Body of pancreas (tissue), 4 donors: ENCODE measurements at regions of chr2 and their contacts with region 1.

Region 1: DNA sequence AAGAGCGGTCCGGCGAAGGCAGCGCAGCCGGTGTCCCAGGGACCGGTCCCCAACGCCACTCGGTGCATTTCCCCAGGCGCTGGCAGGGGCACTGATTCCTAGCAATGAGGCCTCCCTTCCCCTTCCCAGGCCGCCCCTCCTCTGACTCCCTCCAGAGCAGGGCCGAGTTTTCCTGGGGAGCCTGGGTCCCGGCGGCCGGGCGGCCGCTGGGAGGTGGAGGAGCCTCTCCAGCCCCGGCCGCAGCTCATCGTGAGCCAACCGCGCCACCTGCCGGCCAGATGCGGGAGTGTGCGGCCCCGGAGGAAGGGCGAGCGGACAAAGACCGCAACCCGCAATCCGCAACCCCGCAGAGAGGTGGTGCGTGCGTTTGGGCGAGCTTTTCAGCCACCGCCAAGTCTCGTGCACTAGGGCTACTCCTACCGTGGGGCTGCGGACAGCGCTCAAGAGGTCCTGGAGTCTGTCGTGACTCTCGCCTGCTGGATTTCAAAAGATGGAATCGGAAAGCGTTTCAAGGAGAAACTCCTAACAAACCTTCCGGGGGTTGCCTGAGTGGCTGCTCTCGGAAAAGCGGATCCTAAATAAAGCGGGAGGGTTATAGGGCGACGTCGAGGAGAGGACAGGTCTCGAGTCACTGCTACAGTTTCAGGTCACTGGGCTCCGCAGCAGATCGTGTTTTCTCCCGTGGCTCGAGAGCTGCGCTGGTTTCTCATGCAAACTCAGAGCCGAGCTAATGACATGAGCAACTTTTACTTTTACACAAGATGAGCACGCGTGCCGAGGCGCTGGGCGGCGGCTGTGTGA is 1.5 kb upstream of the EPHA4 start:
- DNase-seq: peak; percentile 82 to 90 (median 86)
- ATAC-seq: peak; percentile 79
- H3K4me3 ChIP-seq: peak overlapping the region; percentile 30 to 70
- H3K27ac ChIP-seq: peak overlapping the region in 3 of 4 donors; percentile 70 to 77 (median 75)
- H3K4me1 ChIP-seq: peaks cover 31% of the 10 kb centered on the region
- H3K27me3 ChIP-seq: peaks cover 0 to 27% of the 10 kb centered on the region in 2 donors
- CTCF ChIP-seq: peak; percentile 92 to 98 (median 97)
- POLR2A ChIP-seq: peak in 2 of 3 donors; percentile 11 to 46

Region 2: GRCh38 chr2:219736209-219736608 is 1837.4 kb before region 1 on chr2:
- intact Hi-C with region 1: loop called (anchors 10 kb)
- DNase-seq: peak in 2 of 4 donors; percentile 9 to 44
- ATAC-seq: peak; percentile 45
- H3K4me3 ChIP-seq: no peak overlapping the region
- H3K27ac ChIP-seq: no peak overlapping the region
- H3K4me1 ChIP-seq: no peaks in the 10 kb centered on the region
- H3K27me3 ChIP-seq: no peaks in the 10 kb centered on the region
- CTCF ChIP-seq: peak in 6 of 7 experiments; percentile 44 to 68 (median 63)
- POLR2A ChIP-seq: no peak

Region 3: GRCh38 chr2:220178991-220179648 is 1394.5 kb before region 1 on chr2:
- intact Hi-C with region 1: loop called (anchors 10 kb)
- DNase-seq: no peak
- ATAC-seq: no peak
- H3K4me3 ChIP-seq: no peak overlapping the region
- H3K27ac ChIP-seq: no peak overlapping the region
- H3K4me1 ChIP-seq: no peaks in the 10 kb centered on the region
- H3K27me3 ChIP-seq: no peaks in the 10 kb centered on the region
- CTCF ChIP-seq: no peak
- POLR2A ChIP-seq: no peak

Region 4: DNA sequence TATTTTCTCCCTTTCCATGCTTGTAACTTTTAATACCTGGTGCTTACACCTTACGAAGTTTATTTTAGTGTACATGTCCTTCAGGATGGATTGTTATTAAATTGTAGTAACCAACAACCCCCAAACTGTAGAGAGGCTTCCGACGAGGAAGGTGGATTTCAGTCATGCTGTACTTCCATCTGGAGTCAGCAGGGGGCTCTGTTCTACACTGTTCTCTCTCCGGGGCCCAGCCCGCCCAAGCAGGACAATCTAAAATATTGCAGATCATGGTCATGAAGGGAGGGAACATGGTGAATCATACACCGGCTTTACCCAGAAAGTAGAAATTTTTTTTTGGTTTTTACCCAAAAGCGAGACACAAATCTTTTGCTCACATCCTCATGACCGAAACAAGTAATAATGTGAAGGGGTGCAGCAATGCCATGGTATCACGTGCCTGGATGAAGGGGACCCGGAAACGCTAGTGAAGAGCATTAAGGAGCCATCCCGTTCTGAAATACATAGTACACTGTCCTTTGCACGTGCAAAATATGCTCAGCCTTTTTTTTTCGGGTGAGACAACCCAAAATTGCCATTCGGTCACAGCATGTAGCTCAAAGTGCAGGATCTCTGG is 886.3 kb before region 1 on chr2:
- intact Hi-C with region 1: loop called (anchors 5 kb)
- DNase-seq: peak; percentile 66 to 76 (median 69)
- ATAC-seq: peak; percentile 64
- H3K4me3 ChIP-seq: no peak overlapping the region
- H3K27ac ChIP-seq: no peak overlapping the region
- H3K4me1 ChIP-seq: no peaks in the 10 kb centered on the region
- H3K27me3 ChIP-seq: no peaks in the 10 kb centered on the region
- CTCF ChIP-seq: peak; percentile 61 to 82 (median 74)
- POLR2A ChIP-seq: no peak

Region 5: GRCh38 chr2:221153226-221153625 is 420.4 kb before region 1 on chr2:
- intact Hi-C with region 1: no loop called
- DNase-seq: no peak
- ATAC-seq: no peak
- H3K4me3 ChIP-seq: no peak overlapping the region
- H3K27ac ChIP-seq: no peak overlapping the region
- H3K4me1 ChIP-seq: no peaks in the 10 kb centered on the region
- H3K27me3 ChIP-seq: no peaks in the 10 kb centered on the region
- CTCF ChIP-seq: no peak
- POLR2A ChIP-seq: no peak

Region 6: DNA sequence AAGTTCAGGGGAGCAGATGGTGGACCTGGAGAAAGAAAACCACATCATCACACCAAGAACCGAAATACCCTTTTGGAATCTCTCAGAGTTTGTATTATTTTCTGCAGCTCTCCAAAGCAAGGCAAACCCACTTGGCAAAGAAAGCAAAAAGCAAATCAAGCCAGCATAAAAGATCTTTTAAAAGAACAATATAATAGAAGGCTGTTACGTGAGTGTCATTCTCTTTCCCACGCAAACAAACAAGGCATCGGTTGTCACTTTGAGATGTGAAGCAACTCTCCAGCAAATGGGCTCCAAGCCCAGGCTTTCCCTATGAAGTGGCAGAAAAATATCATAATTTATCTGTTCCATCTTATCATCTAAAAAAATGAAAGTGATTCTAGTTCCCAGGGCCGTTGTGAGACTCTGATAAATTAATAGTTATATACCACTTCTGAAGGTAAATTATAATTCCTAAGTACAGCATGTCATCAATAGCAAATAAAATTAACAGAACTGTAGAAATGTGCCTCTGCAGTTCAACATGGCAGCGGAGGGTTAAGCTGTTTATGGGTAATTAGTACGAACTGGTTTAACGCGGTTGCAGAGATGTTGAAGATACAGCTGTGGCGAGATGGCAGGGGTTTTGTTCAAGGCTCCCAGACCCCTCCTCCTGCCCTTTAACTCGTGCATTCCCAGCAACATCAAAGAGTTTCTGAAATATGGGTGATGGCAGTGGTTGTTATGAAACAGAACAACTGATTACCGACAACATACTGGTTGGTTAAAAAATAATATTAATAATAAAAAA is 90.8 kb before region 1 on chr2:
- intact Hi-C with region 1: no loop called
- DNase-seq: no peak
- ATAC-seq: no peak
- H3K4me3 ChIP-seq: no peak overlapping the region
- H3K27ac ChIP-seq: no peak overlapping the region
- H3K4me1 ChIP-seq: no peaks in the 10 kb centered on the region
- H3K27me3 ChIP-seq: no peaks in the 10 kb centered on the region
- CTCF ChIP-seq: no peak
- POLR2A ChIP-seq: no peak

Region 7: GRCh38 chr2:222115296-222115695 is 541.7 kb after region 1 on chr2:
- intact Hi-C with region 1: no loop called
- DNase-seq: no peak
- ATAC-seq: no peak
- H3K4me3 ChIP-seq: no peak overlapping the region
- H3K27ac ChIP-seq: no peak overlapping the region
- H3K4me1 ChIP-seq: no peaks in the 10 kb centered on the region
- H3K27me3 ChIP-seq: no peaks in the 10 kb centered on the region
- CTCF ChIP-seq: no peak
- POLR2A ChIP-seq: no peak